ENCODE measurements at regions of chr19 and their contacts with region 1.

Region 1: DNA sequence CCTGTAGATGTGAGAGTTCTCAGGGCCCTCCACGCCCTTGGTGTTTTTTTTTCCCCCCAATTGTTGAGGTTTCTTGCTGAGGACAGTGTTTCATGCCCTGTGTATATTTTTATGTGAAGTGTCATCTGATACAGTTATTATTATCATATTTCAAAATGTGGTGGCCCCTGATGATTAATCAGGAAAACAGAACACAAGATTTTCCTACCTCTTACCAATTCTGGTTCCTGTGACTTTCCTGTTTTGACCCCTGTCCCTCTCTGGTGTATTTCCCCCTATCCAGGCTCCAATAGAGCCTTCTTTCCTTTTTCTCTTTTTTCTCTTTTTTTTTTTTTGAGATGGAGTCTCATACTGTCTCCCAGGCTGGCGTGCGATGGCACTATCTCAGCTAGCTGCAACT is 642 bp downstream of the PSG8 start:
- DNase-seq: no peak
- ATAC-seq: no peak
- H3K4me3 ChIP-seq: no peak overlapping the region
- H3K27ac ChIP-seq: no peak overlapping the region
- H3K4me1 ChIP-seq: no peaks in the 10 kb centered on the region
- H3K27me3 ChIP-seq: no peaks in the 10 kb centered on the region
- CTCF ChIP-seq: no peak

Region 2: DNA sequence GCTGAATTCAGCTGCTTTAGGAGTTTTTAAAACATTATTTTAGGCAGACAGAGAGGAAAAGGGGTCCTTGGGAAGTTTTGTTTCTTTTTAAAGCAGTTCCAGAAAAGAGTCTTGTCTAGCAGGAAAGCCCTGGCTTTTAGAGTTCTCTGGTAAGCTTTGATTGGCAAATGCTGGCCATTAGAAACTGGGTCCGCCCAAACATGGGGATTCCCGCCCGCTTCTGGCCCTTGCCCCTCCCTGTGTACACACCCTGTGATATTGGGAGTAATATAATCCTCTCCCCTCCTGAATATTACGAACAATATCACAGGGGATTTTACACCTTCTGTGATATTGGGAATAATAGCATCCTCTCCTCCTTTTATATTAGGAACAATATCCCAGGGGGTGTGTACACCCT is 1263.0 kb before region 1 on chr19:
- CTCF ChIA-PET with region 1: no interaction called
- POLR2A ChIA-PET with region 1: no interaction called
- in situ Hi-C with region 1: no loop called
- intact Hi-C with region 1: no loop called
- DNase-seq: no peak
- ATAC-seq: peak; percentile 56; the same call in 1 of the 2 replicates
- H3K4me3 ChIP-seq: peak overlapping the region; percentile 12 to 48; a peak in 3 of 4 replicates
- H3K27ac ChIP-seq: no peak overlapping the region
- H3K4me1 ChIP-seq: no peaks in the 10 kb centered on the region
- H3K27me3 ChIP-seq: peaks cover 2% of the 10 kb centered on the region; the same call in 1 of the 2 replicates
- CTCF ChIP-seq: no peak

Region 3: GRCh38 chr19:42693764-42694350 is 71.0 kb before region 1 on chr19:
- CTCF ChIA-PET with region 1: no interaction called
- POLR2A ChIA-PET with region 1: no interaction called
- in situ Hi-C with region 1: no loop called
- intact Hi-C with region 1: loop called (anchors 10 kb)
- DNase-seq: no peak
- ATAC-seq: peak; percentile 87
- H3K4me3 ChIP-seq: no peak overlapping the region
- H3K27ac ChIP-seq: no peak overlapping the region
- H3K4me1 ChIP-seq: no peaks in the 10 kb centered on the region
- H3K27me3 ChIP-seq: peaks cover 5% of the 10 kb centered on the region
- CTCF ChIP-seq: peak; percentile 77